Activated CD4-positive, alpha-beta memory T cell treated with anti-CD3 and anti-CD28 coated beads for 36 hours (primary cell): ENCODE measurements at regions of chr6 and their contacts with region 1.

Region 1: GRCh38 chr6:20401205-20402091 is at the start of gene E2F3:
- DNase-seq: peak; percentile 100
- H3K4me3 Mint-ChIP-seq: peak within 1 kb of the TSS; percentile 97
- H3K27ac Mint-ChIP-seq: peak within 1 kb of the TSS; percentile 98
- H3K4me1 Mint-ChIP-seq: peaks cover 35% of the 10 kb centered on the region
- H3K27me3 Mint-ChIP-seq: no peaks in the 10 kb centered on the region
- total RNA-seq, gene E2F3: 17.9 to 18.2 TPM

Region 2: GRCh38 chr6:20212392-20213217 is 188.8 kb before region 1 on chr6 and contains the start of gene MBOAT1:
- CTCF ChIA-PET with region 1: no interaction called
- POLR2A ChIA-PET with region 1: no interaction called
- intact Hi-C with region 1: loop called (anchors 1 kb)
- DNase-seq: peak; percentile 81
- H3K4me3 Mint-ChIP-seq: peak within 1 kb of the TSS; percentile 86
- H3K27ac Mint-ChIP-seq: peak within 1 kb of the TSS; percentile 90
- H3K4me1 Mint-ChIP-seq: peaks cover 35% of the 10 kb centered on the region
- H3K27me3 Mint-ChIP-seq: no peaks in the 10 kb centered on the region
- total RNA-seq, gene MBOAT1: 13.4 to 14.0 TPM

Region 3: GRCh38 chr6:20319520-20320357 is 81.7 kb before region 1 on chr6:
- CTCF ChIA-PET with region 1: interaction called, 9 read pairs
- POLR2A ChIA-PET with region 1: interaction called, 29 read pairs
- intact Hi-C with region 1: loop called (anchors 1 kb)
- DNase-seq: peak; percentile 84
- H3K4me3 Mint-ChIP-seq: peak overlapping the region; percentile 83
- H3K27ac Mint-ChIP-seq: peak overlapping the region; percentile 96
- H3K4me1 Mint-ChIP-seq: peaks cover 15% of the 10 kb centered on the region
- H3K27me3 Mint-ChIP-seq: no peaks in the 10 kb centered on the region

Region 4: GRCh38 chr6:20350215-20350614 is 51.2 kb before region 1 on chr6:
- CTCF ChIA-PET with region 1: interaction called, 3 read pairs
- POLR2A ChIA-PET with region 1: no interaction called
- intact Hi-C with region 1: loop called (anchors 5 kb)
- DNase-seq: no peak
- H3K4me3 Mint-ChIP-seq: no peak overlapping the region
- H3K27ac Mint-ChIP-seq: no peak overlapping the region
- H3K4me1 Mint-ChIP-seq: peaks cover 11% of the 10 kb centered on the region
- H3K27me3 Mint-ChIP-seq: no peaks in the 10 kb centered on the region

Region 5: DNA sequence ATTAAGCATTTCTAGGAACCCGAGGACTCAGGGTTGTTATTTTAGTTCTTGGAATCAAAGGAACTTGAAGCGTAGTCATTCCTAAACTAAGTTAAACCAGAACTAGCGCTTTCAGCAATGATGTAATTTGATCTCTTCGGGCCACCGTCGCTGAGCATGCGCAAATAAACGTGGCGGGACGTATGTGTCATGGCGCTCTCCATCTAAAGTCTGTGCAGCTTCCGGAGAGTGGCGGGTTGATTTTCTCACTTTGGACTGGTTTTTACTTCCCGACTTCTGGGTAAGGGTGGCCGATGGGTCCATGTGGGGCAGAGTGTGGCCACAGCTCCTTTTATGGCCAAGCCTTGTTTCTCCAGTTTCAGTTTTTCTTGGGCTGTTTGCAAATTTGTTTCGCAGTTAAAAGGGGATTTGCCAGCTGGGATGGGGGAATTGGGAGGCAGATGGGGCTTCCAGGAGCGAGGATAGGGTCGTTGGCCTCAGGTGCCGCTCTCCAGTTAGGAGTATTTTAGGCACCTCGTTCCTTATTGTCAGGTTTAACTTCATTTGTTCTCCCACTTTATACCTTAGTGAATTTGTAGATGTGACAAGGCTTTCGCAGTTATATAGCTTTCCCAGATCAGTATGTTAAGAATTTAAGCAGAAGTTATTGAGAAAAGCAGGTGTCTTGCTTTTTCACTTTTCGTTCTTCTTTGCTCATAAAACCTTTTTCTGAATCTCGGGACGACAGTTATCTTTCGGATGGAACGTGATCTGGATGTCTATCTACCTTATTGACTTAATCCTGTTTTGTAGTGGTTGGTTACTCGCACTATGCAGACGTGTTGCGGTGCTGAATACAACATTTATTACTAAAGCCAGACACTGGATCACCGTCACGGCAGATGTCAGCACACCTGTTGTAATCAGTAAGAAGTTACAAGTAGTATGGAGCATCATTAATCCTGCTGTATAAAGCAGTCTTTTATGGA is 133.1 kb after region 1 on chr6 and contains the start of gene CDKAL1:
- CTCF ChIA-PET with region 1: interaction called, 25 read pairs
- POLR2A ChIA-PET with region 1: interaction called, 5 read pairs
- intact Hi-C with region 1: loop called (anchors 1 kb)
- DNase-seq: peak; percentile 96
- H3K4me3 Mint-ChIP-seq: peak within 1 kb of the TSS; percentile 99
- H3K27ac Mint-ChIP-seq: peak within 1 kb of the TSS; percentile 97
- H3K4me1 Mint-ChIP-seq: peaks cover 34% of the 10 kb centered on the region
- H3K27me3 Mint-ChIP-seq: peaks cover 3% of the 10 kb centered on the region
- total RNA-seq, gene CDKAL1: 23.1 to 23.2 TPM

Region 6: DNA sequence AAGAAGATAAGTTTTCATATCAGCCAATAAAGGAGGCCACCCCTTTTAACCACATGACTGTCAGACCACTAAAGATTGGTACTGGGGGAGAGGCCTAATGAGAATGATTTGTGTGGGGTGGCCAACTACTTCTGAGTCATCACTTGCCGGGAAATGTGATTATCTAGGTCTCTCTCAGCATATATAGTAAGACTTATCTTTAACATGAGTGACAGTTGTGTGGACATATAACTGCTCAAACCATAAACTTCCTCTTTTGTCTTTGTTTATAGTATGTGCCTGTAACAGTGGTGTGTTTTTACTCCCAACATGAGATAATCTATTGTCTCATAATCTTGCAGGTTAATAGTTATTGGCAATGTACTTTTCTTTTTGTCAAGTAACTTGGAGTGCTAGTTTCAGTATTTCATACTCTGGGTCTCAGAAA is 445.2 kb after region 1 on chr6:
- CTCF ChIA-PET with region 1: no interaction called
- POLR2A ChIA-PET with region 1: no interaction called
- intact Hi-C with region 1: no loop called
- DNase-seq: peak; percentile 19
- H3K4me3 Mint-ChIP-seq: no peak overlapping the region
- H3K27ac Mint-ChIP-seq: no peak overlapping the region
- H3K4me1 Mint-ChIP-seq: peaks cover 13% of the 10 kb centered on the region
- H3K27me3 Mint-ChIP-seq: no peaks in the 10 kb centered on the region